ENCODE measurements at regions of chr12 and their contacts with region 1.

Region 1: DNA sequence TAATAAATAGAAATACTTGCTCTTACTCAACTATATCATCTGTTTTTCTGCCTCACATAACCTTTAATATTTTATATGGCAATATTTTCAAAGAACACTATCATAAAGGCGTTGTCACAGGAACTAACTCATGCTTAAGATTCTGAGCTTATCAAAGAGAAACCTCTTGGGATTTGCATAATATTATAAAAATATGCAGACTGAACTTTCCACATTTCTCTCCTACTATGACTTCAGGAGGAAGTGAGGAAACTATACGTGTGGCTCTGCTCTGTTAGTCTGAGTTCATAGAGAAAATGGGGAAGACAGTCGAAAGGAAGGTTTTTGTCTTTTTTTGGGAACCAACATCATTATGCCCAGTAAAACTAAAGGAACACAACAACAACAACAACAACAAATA is 124.7 kb downstream of the GARIN6 start:
- DNase-seq: no peak
- H3K4me3 ChIP-seq: no peak overlapping the region
- H3K27ac ChIP-seq: no peak overlapping the region
- H3K4me1 ChIP-seq: peaks cover 0 to 3% (median 0%) of the 10 kb centered on the region in 4 donors
- H3K27me3 ChIP-seq: no peaks in the 10 kb centered on the region
- CTCF ChIP-seq: no peak
- EP300 ChIP-seq: no peak
- POLR2A ChIP-seq: no peak

Region 2: GRCh38 chr12:99043319-99043914 is 728.9 kb before region 1 on chr12:
- intact Hi-C with region 1: loop called (anchors 10 kb)
- DNase-seq: peak; percentile 61 to 86
- H3K4me3 ChIP-seq: no peak overlapping the region
- H3K27ac ChIP-seq: no peak overlapping the region
- H3K4me1 ChIP-seq: no peaks in the 10 kb centered on the region
- H3K27me3 ChIP-seq: no peaks in the 10 kb centered on the region
- CTCF ChIP-seq: peak in 5 of 7 experiments; percentile 46 to 78 (median 64)
- EP300 ChIP-seq: no peak
- POLR2A ChIP-seq: no peak

Region 3: GRCh38 chr12:99977550-99977949 is 205.3 kb after region 1 on chr12:
- intact Hi-C with region 1: no loop called
- DNase-seq: no peak
- H3K4me3 ChIP-seq: no peak overlapping the region
- H3K27ac ChIP-seq: no peak overlapping the region
- H3K4me1 ChIP-seq: no peaks in the 10 kb centered on the region
- H3K27me3 ChIP-seq: no peaks in the 10 kb centered on the region
- CTCF ChIP-seq: no peak
- EP300 ChIP-seq: no peak
- POLR2A ChIP-seq: no peak

Region 4: DNA sequence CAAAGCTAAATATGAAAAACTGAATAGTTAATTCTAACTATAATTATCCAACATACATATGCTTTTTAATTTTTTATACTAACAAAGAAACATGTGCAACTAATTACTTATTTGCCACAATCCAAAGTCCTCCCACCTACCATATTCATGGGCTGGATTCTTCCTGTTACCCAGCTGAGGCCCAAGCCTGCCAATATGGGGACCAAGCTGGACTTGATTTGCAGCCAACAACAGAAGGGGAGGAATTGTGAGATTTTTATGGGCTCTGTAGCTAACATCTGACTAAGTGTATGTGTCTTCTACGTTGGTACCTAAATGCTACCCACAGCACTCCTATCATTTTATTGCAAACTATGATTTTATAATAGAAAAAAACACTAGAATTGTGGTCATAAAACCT is 225.5 kb after region 1 on chr12:
- intact Hi-C with region 1: no loop called
- DNase-seq: no peak
- H3K4me3 ChIP-seq: no peak overlapping the region
- H3K27ac ChIP-seq: no peak overlapping the region
- H3K4me1 ChIP-seq: no peaks in the 10 kb centered on the region
- H3K27me3 ChIP-seq: no peaks in the 10 kb centered on the region
- CTCF ChIP-seq: no peak
- EP300 ChIP-seq: no peak
- POLR2A ChIP-seq: no peak

Measured in stomach (tissue), 19 donors.